ENCODE measurements at regions of chr7 and their contacts with region 1.

Region 1: DNA sequence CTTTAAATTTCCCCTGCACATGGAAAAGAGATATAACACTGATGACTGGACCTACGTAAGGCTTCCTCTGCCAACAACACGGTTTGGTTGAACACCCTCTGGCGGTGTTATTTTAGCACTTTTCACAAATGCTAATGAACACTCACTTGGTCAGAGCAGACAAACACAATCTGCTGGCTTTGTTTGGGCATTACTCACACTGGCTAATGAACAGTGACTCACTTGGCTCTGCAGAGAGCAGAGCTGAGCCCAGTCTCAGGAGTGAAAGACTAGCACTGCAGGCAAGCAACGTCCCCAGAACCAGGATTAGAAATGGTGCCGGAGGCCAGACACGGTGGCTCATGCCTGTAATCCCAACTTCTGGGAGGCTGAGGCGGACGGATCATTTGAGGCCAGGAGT is 430.8 kb downstream of the PLXNA4 start:
- DNase-seq: peak; percentile 90
- H3K4me3 Mint-ChIP-seq: no peak overlapping the region
- H3K27ac Mint-ChIP-seq: no peak overlapping the region
- H3K4me1 Mint-ChIP-seq: peaks cover 6% of the 10 kb centered on the region
- H3K27me3 Mint-ChIP-seq: peaks cover under 1% of the 10 kb centered on the region
- CTCF ChIP-seq: peak; percentile 13

Region 2: GRCh38 chr7:132065193-132065988 is 80.1 kb before region 1 on chr7:
- CTCF ChIA-PET with region 1: interaction called, 3 read pairs
- POLR2A ChIA-PET with region 1: no interaction called
- intact Hi-C with region 1: loop called (anchors 5 kb)
- DNase-seq: peak; percentile 88
- H3K4me3 Mint-ChIP-seq: no peak overlapping the region
- H3K27ac Mint-ChIP-seq: peak overlapping the region; percentile 87
- H3K4me1 Mint-ChIP-seq: peaks cover 11% of the 10 kb centered on the region
- H3K27me3 Mint-ChIP-seq: no peaks in the 10 kb centered on the region
- CTCF ChIP-seq: no peak